ENCODE measurements at regions of chr9 and their contacts with region 1.

Region 1: GRCh38 chr9:4792572-4793458 is at the start of gene RCL1:
- DNase-seq: peak; percentile 97
- H3K4me3 ChIP-seq: peak within 1 kb of the TSS; percentile 80
- H3K27ac ChIP-seq: peak within 1 kb of the TSS; percentile 45
- H3K4me1 ChIP-seq: peaks cover 27% of the 10 kb centered on the region
- CTCF ChIP-seq: no peak
- total RNA-seq, gene RCL1: 25.0 and 27.5 TPM in 2 replicates

Region 2: DNA sequence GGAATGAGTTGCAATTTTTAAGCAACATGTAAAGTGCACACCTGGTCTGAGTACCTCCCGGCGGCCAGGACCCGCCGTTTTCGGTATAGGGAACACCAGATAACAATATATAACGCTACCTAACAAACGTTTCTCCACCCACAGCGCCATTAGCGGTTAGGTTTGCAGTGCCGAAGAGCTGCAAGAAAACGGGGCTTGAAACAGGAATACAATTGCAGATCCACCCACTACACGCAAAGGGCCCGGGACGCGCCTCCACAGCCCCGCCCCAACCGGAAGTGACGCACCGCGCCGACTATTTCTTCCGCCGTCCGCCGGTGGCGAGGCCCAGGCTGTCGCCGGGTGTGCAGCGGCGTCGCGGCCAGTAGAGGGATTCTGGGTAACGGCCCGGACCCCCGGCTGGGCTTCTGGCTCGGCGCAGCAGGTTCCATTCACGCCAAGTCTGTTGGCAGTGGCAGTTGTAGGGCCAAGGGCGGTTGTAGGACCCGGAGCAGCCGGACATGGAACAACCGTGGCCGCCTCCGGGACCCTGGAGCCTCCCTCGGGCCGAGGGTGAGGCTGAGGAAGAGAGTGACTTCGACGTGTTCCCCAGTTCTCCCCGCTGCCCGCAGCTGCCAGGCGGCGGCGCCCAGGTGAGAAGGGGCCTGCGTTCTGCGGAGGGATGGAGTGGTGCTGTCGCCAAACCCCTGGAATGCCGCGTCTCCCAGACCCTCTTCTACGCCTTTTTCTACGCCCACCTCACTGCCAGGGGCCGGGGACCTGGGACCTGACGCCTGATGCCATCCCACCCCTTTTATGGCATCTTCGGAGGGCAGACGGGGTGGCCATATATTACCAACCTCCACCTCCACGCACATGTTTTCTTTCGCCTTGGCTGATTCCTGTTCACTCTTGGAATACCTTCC is 113.3 kb before region 1 on chr9 and contains the start of gene CDC37L1:
- CTCF ChIA-PET with region 1: no interaction called
- POLR2A ChIA-PET with region 1: no interaction called
- intact Hi-C with region 1: loop called (anchors 2 kb)
- DNase-seq: peak; percentile 96
- H3K4me3 ChIP-seq: peak within 1 kb of the TSS; percentile 90
- H3K27ac ChIP-seq: peak within 1 kb of the TSS; percentile 80
- H3K4me1 ChIP-seq: peaks cover 20% of the 10 kb centered on the region
- CTCF ChIP-seq: peak; percentile 65
- total RNA-seq, gene CDC37L1: 11.7 and 13.8 TPM in 2 replicates

Region 3: GRCh38 chr9:4740638-4741364 is 52.0 kb before region 1 on chr9 and contains the start of gene AK3:
- CTCF ChIA-PET with region 1: no interaction called
- POLR2A ChIA-PET with region 1: interaction called, 3 read pairs
- intact Hi-C with region 1: loop called (anchors 2 kb)
- DNase-seq: peak; percentile 94
- H3K4me3 ChIP-seq: peak within 1 kb of the TSS; percentile 86
- H3K27ac ChIP-seq: peak within 1 kb of the TSS; percentile 61
- H3K4me1 ChIP-seq: peaks cover 23% of the 10 kb centered on the region
- CTCF ChIP-seq: peak; percentile 49
- total RNA-seq, gene AK3: 64.4 and 108 TPM in 2 replicates

Region 4: DNA sequence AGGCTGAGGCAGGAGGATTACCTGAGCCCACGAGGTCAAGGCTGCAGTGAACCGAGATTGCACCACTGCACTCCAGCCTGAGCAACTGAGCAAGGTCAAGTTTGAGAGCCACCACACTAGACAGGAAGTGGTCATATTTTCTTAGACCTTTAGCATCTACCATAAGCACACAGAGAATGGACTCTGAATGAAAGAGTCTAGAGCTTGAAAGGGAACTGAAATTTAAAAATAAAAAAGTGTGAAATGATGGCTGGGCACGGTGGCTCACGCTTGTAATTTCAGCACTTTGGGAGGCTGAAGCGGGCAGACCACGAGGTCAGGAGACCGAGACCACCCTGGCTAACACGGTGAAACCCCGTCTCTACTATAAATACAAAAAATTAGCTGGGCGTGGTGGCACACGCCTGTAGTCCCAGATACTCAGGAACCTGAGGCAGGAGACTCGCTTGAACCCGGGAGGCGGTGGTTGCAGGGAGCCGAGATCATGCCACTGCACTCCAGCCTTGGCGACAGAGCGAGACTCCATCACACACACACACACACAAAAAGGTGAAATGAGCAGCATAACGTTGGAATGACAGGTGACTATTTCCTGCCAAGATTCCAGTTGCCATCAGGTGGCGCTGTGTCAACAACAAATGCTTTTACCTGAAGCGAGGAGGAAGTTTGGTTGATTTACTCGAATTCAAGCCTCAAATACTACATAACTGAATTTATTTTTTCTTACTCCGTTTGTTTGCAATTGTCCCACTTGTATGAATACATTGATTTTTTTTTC is 30.5 kb before region 1 on chr9:
- CTCF ChIA-PET with region 1: no interaction called
- POLR2A ChIA-PET with region 1: interaction called, 4 read pairs
- intact Hi-C with region 1: loop called (anchors 2 kb)
- DNase-seq: peak; percentile 87
- H3K4me3 ChIP-seq: peak overlapping the region; percentile 58
- H3K27ac ChIP-seq: no peak overlapping the region
- H3K4me1 ChIP-seq: peaks cover 17% of the 10 kb centered on the region
- CTCF ChIP-seq: peak; percentile 90

Region 5: DNA sequence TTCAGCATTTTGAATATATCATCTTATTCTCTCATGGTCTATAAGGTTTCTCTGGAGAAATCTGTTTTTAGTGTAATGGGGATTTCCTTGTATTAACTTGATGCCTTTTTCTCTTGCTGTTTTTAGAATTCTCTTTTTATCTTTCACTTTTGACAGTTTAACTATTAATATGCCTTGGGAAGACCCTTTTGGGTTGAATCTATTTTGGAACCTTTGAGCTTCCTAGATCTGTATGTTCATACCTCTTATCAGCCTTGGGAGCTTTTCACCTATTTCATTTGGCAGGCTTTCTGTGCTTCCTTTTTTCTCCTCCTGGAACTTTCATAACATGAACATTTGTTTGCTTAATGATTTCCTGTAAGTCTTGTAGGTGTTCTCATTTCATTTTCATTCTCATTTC is 22.1 kb after region 1 on chr9:
- CTCF ChIA-PET with region 1: no interaction called
- POLR2A ChIA-PET with region 1: interaction called, 13 read pairs
- intact Hi-C with region 1: no loop called
- DNase-seq: peak; percentile 25
- H3K4me3 ChIP-seq: peak overlapping the region; percentile 42
- H3K27ac ChIP-seq: peak overlapping the region; percentile 58
- H3K4me1 ChIP-seq: peaks cover 47% of the 10 kb centered on the region
- CTCF ChIP-seq: no peak

Measured in OCI-LY7 (cell line).